PC-3 (cell line): ENCODE measurements at regions of chr5 and their contacts with region 1.

Region 1: DNA sequence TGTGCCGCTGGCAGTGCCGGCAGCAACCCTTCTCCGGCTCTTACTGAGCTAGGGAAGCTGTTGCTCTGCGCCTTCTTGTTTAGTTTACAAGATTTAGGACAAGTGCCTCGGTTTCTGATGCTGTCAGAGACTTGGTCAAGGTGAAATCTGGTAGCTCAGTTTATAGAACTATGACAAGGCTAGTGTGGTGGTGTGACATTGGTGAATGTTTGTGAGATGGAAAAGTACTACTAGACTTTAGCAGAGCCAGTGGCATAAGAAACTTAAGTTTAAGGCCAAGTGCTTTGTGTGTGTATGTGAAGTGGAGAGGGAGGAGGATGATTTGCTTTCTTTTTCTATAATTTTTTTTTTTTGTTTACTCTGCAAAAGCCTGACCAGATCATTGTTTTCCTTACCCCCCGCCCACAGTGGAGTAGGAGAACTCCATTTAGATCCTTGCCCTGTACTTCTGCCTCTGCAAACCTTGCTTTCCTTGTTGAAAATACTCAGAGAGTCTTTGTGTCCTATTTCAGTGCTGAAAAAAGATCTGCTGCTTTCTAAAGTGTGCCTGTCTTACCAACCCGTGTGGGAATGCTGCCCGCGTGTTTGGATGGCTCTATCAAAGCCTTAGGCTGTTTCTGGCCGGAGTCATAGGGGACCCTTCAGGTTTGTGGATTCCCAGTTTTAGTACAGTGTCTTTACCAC is 75.9 kb downstream of the TRIO start:
- DNase-seq: no peak
- ATAC-seq: peak; percentile 54
- H3K4me3 ChIP-seq: no peak overlapping the region
- H3K27ac ChIP-seq: no peak overlapping the region
- H3K4me1 ChIP-seq: peaks cover 59% of the 10 kb centered on the region
- H3K27me3 ChIP-seq: no peaks in the 10 kb centered on the region
- CTCF ChIP-seq: no peak

Region 2: DNA sequence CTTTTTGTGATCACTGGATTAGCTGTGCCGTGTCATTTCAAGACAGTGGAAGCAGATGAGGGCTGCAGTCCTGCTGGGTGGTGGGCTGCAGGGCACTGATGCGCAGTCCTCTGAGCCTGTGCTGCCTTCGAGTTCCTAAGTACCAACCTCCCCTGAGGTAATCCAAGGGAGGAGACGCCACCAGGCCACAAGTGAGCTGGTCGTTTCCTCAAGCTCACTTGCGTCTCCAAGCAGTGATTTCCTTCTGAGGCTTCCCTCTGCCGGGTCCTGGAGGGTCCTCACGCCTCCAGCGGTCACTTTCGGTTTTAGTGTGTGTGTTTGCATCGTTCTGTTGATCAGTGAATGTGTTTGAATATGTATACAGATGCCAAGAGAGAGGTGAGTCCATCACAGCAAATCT is 39.8 kb after region 1 on chr5:
- CTCF ChIA-PET with region 1: no interaction called
- POLR2A ChIA-PET with region 1: no interaction called
- intact Hi-C with region 1: loop called (anchors 5 kb)
- DNase-seq: no peak
- ATAC-seq: no peak
- H3K4me3 ChIP-seq: no peak overlapping the region
- H3K27ac ChIP-seq: no peak overlapping the region
- H3K4me1 ChIP-seq: peaks cover 63% of the 10 kb centered on the region
- H3K27me3 ChIP-seq: no peaks in the 10 kb centered on the region
- CTCF ChIP-seq: no peak